CD8-positive, alpha-beta memory T cell (primary cell): ENCODE measurements at regions of chr2 and their contacts with region 1.

Region 1: DNA sequence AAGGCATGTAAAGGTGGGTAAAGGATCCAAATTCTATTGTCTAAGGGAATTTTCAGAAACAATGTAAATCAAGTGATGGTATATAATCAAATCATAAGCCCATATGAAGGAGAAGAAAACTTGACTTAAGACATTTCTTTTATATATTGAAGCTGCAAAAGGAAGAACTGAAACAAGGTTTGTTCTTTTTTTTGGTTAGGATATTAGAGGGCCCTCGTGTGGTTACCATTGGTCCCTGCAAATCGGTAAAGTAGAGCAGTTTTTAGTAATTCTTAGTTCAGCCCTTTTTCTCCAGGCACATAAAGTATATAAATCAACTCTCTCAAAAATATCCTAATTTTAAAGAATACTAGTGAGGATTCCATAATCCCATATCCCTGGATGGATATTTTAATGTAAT is 105.6 kb upstream of the STK17B start:
- DNase-seq: peak in 3 of 5 donors; percentile 51 to 63 (median 52)
- H3K4me3 ChIP-seq: no peak overlapping the region
- H3K4me3 Mint-ChIP-seq: peak overlapping the region in 5 of 7 donors; percentile 6 to 70 (median 36)
- H3K27ac ChIP-seq: no peak overlapping the region
- H3K27ac Mint-ChIP-seq: peak overlapping the region in 6 of 8 donors; percentile 11 to 84 (median 40)
- H3K4me1 ChIP-seq: peaks cover 34% of the 10 kb centered on the region
- H3K4me1 Mint-ChIP-seq: peaks cover 34 to 39% (median 37%) of the 10 kb centered on the region in 3 donors
- H3K27me3 ChIP-seq: no peaks in the 10 kb centered on the region
- H3K27me3 Mint-ChIP-seq: peaks cover 3 to 5% of the 10 kb centered on the region in 2 donors

Region 2: DNA sequence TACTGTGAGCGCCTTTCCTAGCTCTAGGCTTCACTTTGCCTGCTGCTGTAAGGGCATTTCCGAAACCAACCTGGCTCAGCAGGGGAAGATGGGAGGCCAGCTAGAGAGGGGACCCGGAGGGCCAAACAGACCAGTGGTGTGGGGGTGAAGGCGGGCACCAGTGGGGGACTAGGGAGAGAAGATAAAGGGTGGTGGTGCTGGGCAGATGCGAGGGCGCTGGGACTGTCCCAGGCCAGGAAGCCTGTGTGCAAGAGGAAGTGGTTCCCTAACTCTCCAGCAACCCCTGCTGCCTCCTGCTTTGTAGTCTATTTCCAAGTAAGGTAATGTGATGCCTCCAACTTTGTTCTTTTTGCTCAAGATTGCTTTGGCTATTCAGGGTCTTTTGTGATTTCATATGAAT is 281.5 kb before region 1 on chr2:
- CTCF ChIA-PET with region 1: no interaction called
- POLR2A ChIA-PET with region 1: no interaction called
- DNase-seq: no peak
- H3K4me3 ChIP-seq: no peak overlapping the region
- H3K4me3 Mint-ChIP-seq: no peak overlapping the region
- H3K27ac ChIP-seq: no peak overlapping the region
- H3K27ac Mint-ChIP-seq: no peak overlapping the region
- H3K4me1 ChIP-seq: no peaks in the 10 kb centered on the region
- H3K4me1 Mint-ChIP-seq: no peaks in the 10 kb centered on the region
- H3K27me3 ChIP-seq: no peaks in the 10 kb centered on the region
- H3K27me3 Mint-ChIP-seq: peaks cover 11 to 25% of the 10 kb centered on the region in 2 donors

Region 3: GRCh38 chr2:196239622-196240587 is 37.1 kb before region 1 on chr2:
- CTCF ChIA-PET with region 1: interaction called, 14 read pairs
- POLR2A ChIA-PET with region 1: interaction called, 12 read pairs
- DNase-seq: peak; percentile 64 to 92 (median 85)
- H3K4me3 ChIP-seq: peak overlapping the region; percentile 40
- H3K4me3 Mint-ChIP-seq: peak overlapping the region; percentile 44 to 73 (median 66)
- H3K27ac ChIP-seq: peak overlapping the region; percentile 60
- H3K27ac Mint-ChIP-seq: peak overlapping the region; percentile 84 to 98 (median 92)
- H3K4me1 ChIP-seq: peaks cover 74% of the 10 kb centered on the region
- H3K4me1 Mint-ChIP-seq: peaks cover 68 to 82% (median 77%) of the 10 kb centered on the region in 3 donors
- H3K27me3 ChIP-seq: no peaks in the 10 kb centered on the region
- H3K27me3 Mint-ChIP-seq: no peaks in the 10 kb centered on the region

Region 4: GRCh38 chr2:196247114-196247975 is 29.7 kb before region 1 on chr2:
- CTCF ChIA-PET with region 1: interaction called, 14 read pairs
- POLR2A ChIA-PET with region 1: no interaction called
- DNase-seq: no peak
- H3K4me3 ChIP-seq: no peak overlapping the region
- H3K4me3 Mint-ChIP-seq: no peak overlapping the region
- H3K27ac ChIP-seq: no peak overlapping the region
- H3K27ac Mint-ChIP-seq: peak overlapping the region in 4 of 8 donors; percentile 13 to 67 (median 34)
- H3K4me1 ChIP-seq: peaks cover 56% of the 10 kb centered on the region
- H3K4me1 Mint-ChIP-seq: peaks cover 39 to 67% (median 58%) of the 10 kb centered on the region in 3 donors
- H3K27me3 ChIP-seq: no peaks in the 10 kb centered on the region
- H3K27me3 Mint-ChIP-seq: no peaks in the 10 kb centered on the region

Region 5: DNA sequence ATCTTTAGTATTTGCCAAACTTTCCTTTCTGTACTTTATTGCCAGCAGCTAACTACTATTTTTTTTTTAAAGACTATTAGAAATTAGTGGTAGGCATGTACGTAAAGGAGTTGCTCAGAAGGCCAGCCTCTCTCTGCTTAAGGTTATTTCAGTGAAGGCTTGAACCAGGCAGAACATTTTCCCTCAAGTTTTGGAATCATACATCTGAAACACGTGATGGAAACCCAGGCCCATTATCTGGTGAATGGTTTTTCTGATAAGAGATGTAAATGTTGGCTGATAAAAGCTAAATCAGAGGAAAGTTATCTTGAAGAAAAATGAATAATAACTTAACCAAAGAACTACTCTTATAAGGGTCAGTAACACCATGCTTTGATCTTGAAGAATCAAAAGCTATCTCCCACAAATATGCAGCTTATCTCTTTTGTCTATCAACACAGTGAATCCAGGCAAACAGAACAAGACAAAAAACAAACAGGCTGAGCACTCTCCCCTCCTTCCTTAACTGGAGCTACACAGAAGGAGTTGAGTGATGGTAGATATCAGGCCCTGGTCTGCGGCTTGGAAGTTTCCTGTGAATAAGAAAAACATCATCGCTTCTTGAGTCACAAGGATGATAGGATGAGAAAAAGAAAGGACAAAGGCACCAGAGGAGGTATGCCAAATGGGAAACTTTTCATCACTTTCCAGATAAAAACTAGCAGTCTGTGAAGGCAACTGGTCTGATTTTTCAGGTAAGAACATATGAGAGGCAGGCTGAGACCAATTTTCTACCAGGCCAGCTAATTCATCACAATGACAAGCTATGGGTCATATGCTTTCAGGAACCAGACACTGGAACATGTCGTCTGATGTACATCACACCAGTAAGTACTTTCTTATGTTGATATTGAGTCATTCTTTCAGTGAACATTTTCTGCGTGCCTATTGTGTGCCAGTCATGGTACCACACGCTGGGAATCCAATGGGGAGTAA is 17.2 kb before region 1 on chr2:
- CTCF ChIA-PET with region 1: interaction called, 11 read pairs
- POLR2A ChIA-PET with region 1: interaction called, 3 read pairs
- DNase-seq: peak in 1 of 5 donors; percentile 44
- H3K4me3 ChIP-seq: peak overlapping the region; percentile 60
- H3K4me3 Mint-ChIP-seq: peak overlapping the region; percentile 30 to 75 (median 68)
- H3K27ac ChIP-seq: peak overlapping the region; percentile 55
- H3K27ac Mint-ChIP-seq: peak overlapping the region; percentile 73 to 95 (median 92)
- H3K4me1 ChIP-seq: peaks cover 63% of the 10 kb centered on the region
- H3K4me1 Mint-ChIP-seq: peaks cover 53 to 77% (median 74%) of the 10 kb centered on the region in 3 donors
- H3K27me3 ChIP-seq: no peaks in the 10 kb centered on the region
- H3K27me3 Mint-ChIP-seq: no peaks in the 10 kb centered on the region

Region 6: DNA sequence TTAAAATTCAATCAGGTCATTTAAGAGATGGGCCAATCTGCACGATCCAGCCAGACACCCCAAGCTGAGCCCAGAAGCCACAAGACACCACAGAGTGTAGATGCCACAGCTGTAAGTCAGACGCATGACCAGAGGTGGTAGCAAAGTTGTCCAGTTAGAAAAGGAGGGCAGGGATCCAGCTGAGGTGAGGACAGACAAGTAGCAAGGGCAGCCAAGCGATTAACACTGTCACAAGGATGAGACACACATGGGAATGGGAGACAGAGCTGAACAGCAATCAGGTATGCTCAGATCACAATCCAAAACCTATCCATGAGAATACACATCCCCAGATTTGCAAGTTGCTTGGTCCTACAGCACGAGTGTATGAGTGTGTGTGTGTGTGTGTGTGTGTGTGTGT is 37.8 kb after region 1 on chr2:
- CTCF ChIA-PET with region 1: no interaction called
- POLR2A ChIA-PET with region 1: no interaction called
- DNase-seq: no peak
- H3K4me3 ChIP-seq: no peak overlapping the region
- H3K4me3 Mint-ChIP-seq: no peak overlapping the region
- H3K27ac ChIP-seq: no peak overlapping the region
- H3K27ac Mint-ChIP-seq: no peak overlapping the region
- H3K4me1 ChIP-seq: no peaks in the 10 kb centered on the region
- H3K4me1 Mint-ChIP-seq: no peaks in the 10 kb centered on the region
- H3K27me3 ChIP-seq: no peaks in the 10 kb centered on the region
- H3K27me3 Mint-ChIP-seq: no peaks in the 10 kb centered on the region